ENCODE measurements at regions of chr1 and their contacts with region 1.

Region 1: DNA sequence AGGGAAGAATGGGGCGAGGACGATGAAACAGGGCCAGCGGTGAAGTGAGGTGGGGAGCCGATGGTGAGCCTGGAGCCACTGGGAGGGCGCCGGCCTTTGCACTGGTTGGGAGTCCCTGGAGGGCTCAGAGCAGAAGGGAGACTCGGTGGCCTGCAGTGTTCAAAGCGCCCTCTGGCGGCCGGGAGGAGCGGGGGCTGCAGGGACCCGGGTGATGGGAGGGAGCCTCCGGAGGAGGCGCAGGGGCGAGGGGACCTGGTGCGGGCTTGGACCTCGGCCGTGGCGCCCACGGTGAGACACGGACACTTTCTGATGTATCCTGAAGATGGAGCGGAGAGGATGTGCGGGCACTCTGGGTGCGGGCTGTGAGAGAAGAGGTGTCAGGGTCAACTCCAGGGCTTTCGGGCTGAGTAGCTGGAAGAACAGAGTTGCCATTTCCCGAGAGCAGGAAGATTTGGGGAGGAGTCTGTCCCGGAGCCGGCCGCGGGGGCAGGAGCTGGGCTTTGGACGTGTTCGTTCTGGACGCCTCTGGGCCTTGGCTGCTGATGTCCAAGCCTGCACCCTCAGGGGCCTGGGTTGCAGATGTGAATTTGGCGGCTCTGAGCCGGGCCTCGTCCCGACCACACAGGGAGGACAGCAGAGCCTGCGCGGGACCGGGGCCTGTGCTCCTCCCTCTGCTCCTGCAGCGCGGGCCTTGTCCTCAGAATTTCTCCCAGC is 29.7 kb downstream of the HEYL start:
- DNase-seq: peak; percentile 57 to 69
- ATAC-seq: peak; percentile 81 to 93
- H3K4me3 ChIP-seq: no peak overlapping the region
- H3K27ac ChIP-seq: no peak overlapping the region
- H3K4me1 ChIP-seq: 0 out of 3 replicates have a peak, but pooled peaks cover 3% of the 10 kb centered on the region
- CTCF ChIP-seq: peak; percentile 49
- EP300 ChIP-seq: no peak
- POLR2A ChIP-seq: no peak
- RAD21 ChIP-seq: no peak; a peak in 2 of 5 replicates

Region 2: DNA sequence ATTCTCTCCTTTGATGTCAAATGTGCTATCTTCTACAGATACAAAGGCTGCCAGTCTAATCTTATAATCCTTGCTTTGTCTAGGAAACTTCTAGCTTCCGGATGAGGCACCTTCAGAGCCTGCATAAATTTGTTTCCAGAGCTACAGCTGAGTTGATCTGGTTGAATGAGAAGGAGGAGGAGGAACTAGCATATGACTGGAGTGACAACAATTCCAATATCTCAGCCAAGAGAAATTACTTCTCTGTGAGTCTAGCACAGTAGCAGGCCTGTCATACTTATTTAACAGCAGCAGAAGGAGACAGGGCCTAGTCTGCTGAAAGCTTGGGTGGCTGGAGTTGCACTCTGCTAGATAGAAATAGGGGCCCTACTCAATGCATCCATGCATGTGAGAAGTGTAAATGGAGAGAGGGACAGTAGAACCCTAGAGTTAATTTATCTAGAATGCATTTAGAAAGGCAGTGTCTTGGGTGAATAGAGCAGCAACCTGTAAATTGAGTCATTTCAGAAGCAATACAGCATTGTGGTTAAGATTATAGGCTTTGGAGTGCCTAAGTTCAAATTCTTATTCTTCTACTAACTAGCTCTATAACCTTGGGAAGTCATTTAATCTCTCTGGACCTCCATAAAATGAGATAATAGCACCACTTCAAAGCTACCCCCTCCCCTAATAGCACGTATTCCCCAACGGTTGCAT is 316.3 kb before region 1 on chr1:
- CTCF ChIA-PET with region 1: no interaction called
- POLR2A ChIA-PET with region 1: no interaction called
- DNase-seq: no peak
- ATAC-seq: no peak
- H3K4me3 ChIP-seq: no peak overlapping the region
- H3K27ac ChIP-seq: no peak overlapping the region
- H3K4me1 ChIP-seq: no peaks in the 10 kb centered on the region
- CTCF ChIP-seq: no peak
- EP300 ChIP-seq: no peak
- POLR2A ChIP-seq: no peak
- RAD21 ChIP-seq: no peak

Region 3: DNA sequence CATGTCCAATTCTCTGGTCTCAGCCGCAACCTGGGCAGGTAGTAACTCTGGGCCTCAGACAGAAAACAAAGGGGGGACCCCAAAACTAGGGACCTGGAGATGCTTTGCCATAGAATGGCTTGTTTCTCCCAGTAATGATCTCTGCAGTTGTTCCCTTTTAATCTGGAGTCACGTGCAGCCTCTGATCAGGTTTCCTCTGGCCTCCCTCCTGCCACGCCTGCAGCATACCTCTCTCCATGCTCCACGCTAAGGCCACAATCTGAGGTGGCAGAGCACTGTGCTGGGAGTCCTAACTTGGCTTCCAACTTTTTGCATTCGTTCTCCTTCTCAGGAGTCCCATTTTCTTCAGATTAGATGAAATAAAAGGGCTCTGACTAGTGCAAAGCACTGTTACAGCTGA is 35.1 kb before region 1 on chr1:
- CTCF ChIA-PET with region 1: interaction called, 13 read pairs
- POLR2A ChIA-PET with region 1: interaction called, 5 read pairs
- DNase-seq: no peak
- ATAC-seq: peak in 1 of 2 experiments; percentile 22; a peak in 2 of 6 replicates
- H3K4me3 ChIP-seq: peak overlapping the region; percentile 89
- H3K27ac ChIP-seq: peak overlapping the region; percentile 89 to 100; a peak in 4 of 6 replicates
- H3K4me1 ChIP-seq: peaks cover 23% of the 10 kb centered on the region; the same call in 2 of the 3 replicates
- CTCF ChIP-seq: no peak
- EP300 ChIP-seq: no peak
- POLR2A ChIP-seq: no peak
- RAD21 ChIP-seq: no peak

Region 4: DNA sequence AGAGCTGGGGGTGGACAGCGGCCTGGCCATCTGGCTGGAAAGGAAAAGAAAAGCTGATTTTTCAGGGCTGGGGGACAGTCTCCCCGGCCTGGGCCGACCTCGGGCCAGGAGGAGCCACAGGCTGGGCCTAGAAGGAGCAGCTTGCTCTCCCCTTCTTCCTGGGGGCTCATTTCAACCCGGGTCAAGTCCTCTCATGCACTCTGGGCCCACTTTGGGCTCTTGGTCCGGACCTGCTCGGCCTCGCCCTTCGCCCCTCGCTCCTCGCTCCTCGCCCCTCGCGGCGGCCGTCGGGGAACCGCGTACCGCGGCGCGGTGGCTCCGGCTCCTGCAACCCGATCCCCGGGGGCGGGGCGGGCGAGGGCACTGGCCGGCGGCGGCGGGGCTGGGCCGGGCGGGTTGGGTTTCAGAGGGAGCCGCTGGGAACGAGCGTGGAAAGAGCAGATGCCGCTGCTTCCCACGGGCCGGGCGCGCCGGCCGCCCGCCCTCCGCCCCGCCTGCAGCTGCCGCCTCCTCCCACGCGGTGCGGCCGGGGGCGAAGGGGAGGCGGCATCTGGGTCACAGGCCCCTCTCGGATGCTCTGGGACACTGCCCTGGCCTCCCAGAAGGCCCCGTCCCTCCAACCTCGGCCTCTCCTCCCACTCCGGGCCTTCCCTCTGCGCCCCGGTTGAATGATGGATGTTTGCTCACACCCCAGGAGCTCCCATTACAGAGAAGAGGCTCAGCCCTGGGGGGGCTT is 23.1 kb after region 1 on chr1:
- CTCF ChIA-PET with region 1: interaction called, 12 read pairs
- POLR2A ChIA-PET with region 1: no interaction called
- DNase-seq: no peak
- ATAC-seq: no peak
- H3K4me3 ChIP-seq: no peak overlapping the region
- H3K27ac ChIP-seq: no peak overlapping the region
- H3K4me1 ChIP-seq: no peaks in the 10 kb centered on the region
- CTCF ChIP-seq: no peak
- EP300 ChIP-seq: no peak
- POLR2A ChIP-seq: no peak
- RAD21 ChIP-seq: no peak

Region 5: DNA sequence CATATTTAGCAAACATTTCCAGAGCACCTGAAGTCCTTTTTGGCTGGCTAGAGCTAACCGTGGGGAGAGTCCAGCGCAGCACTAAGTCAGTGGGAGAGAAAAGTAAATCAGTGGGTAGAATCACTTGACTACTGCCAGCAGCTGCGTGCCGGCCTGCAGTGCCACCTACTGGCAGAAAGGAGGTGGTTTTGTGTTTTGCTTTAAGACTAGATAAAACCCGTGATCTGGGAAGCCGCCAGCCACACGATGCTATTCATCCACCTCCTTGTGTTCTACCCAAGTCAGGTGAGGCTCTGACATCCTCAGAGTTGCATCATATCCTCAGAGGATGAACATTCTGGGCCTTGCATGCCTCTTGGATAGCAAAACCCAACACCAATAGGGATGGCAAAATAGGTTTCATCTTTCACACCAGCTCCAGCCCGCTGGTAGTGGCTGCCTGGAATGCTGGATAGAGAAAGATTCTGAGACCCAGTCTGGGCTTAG is 43.8 kb after region 1 on chr1:
- CTCF ChIA-PET with region 1: interaction called, 109 read pairs
- POLR2A ChIA-PET with region 1: interaction called, 5 read pairs
- DNase-seq: peak; percentile 41 to 75
- ATAC-seq: peak; percentile 82 to 86
- H3K4me3 ChIP-seq: no peak overlapping the region
- H3K27ac ChIP-seq: no peak overlapping the region
- H3K4me1 ChIP-seq: no peaks in the 10 kb centered on the region
- CTCF ChIP-seq: peak; percentile 74
- EP300 ChIP-seq: no peak
- POLR2A ChIP-seq: no peak
- RAD21 ChIP-seq: peak; percentile 73 to 79

Region 6: DNA sequence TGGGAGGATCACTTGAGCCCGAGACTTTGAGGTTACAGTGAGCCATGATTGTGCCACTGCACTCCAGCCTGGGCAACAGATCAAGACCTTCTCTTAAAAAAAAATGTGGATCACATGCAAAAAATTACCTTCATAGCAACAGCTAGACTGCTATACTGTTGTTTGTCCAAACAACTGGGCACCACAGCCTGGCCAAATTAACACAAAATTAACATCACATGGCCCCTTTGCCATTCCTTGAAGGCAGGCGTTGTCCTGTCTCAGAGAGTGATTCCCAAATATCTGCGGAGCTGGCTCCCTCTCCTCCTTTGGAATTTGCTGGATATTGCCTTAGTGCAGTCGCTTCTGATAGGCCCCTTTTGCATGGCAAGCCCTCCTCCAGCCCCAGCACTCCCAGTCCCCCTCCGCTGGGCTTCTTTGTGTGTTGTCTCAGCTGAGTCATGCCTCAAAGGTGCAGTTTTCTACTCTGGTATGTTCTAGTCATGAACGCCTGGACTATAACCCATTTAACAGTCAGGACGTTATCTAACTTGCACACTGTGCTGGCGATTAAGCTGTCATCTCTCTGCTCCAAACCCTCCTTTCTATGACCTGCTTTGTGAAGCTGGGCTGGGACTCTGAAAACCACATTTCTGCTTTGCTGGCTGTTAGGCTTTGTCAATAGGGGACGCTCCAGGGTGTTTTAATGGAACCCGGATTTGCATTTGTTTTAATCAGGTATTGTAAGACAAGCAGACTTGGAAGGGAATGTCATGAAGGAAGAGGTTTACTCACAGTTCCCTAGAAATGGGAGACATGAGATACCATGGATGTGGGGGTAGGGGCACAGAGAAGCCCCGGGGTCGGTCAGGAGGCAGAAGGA is 101.6 kb after region 1 on chr1:
- CTCF ChIA-PET with region 1: interaction called, 11 read pairs
- POLR2A ChIA-PET with region 1: no interaction called
- DNase-seq: no peak
- ATAC-seq: no peak
- H3K4me3 ChIP-seq: no peak overlapping the region
- H3K27ac ChIP-seq: no peak overlapping the region
- H3K4me1 ChIP-seq: no peaks in the 10 kb centered on the region
- CTCF ChIP-seq: no peak
- EP300 ChIP-seq: no peak
- POLR2A ChIP-seq: no peak
- RAD21 ChIP-seq: no peak

Region 7: DNA sequence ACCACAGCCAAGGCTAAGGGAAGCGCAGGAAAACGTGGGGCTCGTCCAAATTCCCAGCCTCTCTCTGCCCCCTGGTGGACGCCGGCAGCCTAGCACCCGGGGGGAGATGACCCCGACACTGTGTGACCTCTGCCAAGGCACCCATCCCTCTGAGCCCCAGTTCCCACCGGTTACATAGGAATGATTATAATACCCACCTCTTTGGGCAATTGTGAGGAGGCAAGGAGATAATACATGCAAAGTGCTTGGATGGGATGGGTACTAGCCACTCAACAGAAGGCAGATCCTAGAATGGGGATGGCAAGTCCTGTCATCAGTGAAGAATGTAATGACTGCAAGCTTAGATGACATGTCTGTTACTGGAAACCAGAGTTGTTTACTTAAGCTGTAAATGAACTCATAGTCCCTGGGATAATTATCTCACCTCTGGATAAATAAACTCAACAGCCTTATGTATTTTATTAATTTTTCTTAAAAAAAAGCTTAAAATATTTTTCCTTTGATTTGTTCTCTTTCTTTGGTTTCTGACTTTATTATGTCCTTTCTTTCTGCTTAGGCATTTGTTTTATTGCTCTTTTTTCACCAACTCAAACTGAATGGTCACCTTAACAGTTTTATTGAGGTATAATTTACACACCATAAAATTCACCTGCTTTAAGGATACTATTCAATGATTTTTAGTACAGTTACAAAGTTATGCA is 190.1 kb after region 1 on chr1:
- CTCF ChIA-PET with region 1: interaction called, 15 read pairs
- POLR2A ChIA-PET with region 1: interaction called, 4 read pairs
- DNase-seq: peak; percentile 65 to 69
- ATAC-seq: peak; percentile 92 to 95
- H3K4me3 ChIP-seq: peak overlapping the region; percentile 16; the same call in 1 of the 3 replicates
- H3K27ac ChIP-seq: peak overlapping the region; percentile 60 to 69; a peak in 4 of 6 replicates
- H3K4me1 ChIP-seq: peaks cover 12% of the 10 kb centered on the region; the same call in 2 of the 3 replicates
- CTCF ChIP-seq: peak; percentile 59
- EP300 ChIP-seq: no peak
- POLR2A ChIP-seq: no peak
- RAD21 ChIP-seq: peak; percentile 55